ENCODE measurements at regions of chr6 and their contacts with region 1.

Region 1: DNA sequence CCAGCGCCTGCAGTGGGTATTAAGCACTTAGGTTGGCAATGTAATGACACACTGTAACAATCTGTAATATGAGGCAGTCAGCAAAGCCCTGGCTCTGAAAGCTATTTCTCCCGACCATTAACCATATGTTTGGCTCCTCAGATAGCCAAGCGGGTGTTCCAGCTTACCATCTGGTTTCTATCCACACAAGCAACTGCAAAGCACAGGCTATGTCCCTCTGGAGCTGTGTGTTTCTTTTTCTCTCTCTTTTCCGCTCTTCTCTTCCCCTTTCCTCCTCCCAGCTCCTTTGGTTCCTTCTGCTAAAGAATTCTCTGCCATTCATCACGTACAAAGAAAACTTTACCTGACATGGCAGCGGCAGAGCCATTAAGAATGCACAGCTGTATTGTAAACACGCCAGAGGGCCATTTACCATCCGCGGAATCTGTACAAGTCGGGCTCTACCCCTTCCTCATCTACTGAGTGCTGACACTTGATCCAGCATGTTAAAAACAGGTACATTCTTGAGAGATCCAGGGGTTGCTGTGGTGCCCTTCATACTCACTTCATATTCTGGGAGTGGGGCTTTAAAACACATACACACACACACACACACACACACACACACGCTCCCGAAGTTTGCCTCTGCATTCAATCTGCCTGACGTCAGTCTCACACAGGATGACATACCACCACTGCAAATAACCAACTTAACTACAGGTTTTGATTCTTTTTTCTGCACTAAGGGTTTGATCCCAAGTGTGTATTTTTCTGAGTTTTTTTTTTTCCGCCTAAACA is 77.2 kb downstream of the BACH2 start:
- DNase-seq: no peak
- ATAC-seq: peak; percentile 61
- H3K4me3 ChIP-seq: peak overlapping the region; percentile 1 to 34; a peak in 3 of 4 replicates
- H3K27ac ChIP-seq: peak overlapping the region; percentile 56
- H3K4me1 ChIP-seq: peaks cover 25% of the 10 kb centered on the region
- H3K27me3 ChIP-seq: no peaks in the 10 kb centered on the region
- CTCF ChIP-seq: no peak

Region 2: DNA sequence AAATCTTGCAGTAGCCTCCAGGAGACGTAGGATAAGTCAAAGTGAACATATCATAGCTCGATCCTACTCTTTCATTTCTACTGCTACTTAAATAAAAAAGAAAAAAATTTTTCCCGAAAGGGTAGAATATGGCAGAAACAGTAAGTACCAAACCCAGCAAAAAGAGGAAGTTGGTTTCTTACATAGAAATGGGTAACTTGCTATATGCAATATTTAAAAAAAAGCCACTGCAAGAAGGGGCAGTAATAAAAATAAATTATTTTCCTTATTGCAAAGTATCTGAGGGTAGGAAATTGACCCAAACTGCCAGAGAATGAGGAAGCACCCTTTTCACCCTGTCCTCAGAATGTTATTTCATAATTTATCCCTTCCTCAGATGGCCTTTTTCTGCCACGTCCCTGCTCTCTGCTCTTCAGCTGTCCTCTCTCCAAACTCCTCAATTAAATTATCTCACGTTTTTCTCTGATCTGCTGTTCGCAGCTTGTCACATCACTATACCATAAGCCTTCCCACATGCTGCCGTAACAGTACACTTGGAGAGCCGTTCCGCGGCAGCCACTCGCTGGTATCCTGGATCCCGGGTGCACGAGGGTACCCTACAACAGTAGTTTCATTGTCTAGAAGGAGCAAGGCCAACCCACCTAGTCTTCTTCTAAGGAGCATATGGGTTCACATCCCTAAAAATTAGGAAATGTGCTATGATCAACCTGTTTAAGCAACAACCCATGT is 72.3 kb before region 1 on chr6:
- CTCF ChIA-PET with region 1: no interaction called
- POLR2A ChIA-PET with region 1: interaction called, 12 read pairs
- in situ Hi-C with region 1: no loop called
- intact Hi-C with region 1: no loop called
- DNase-seq: no peak
- ATAC-seq: no peak
- H3K4me3 ChIP-seq: no peak overlapping the region
- H3K27ac ChIP-seq: no peak overlapping the region
- H3K4me1 ChIP-seq: no peaks in the 10 kb centered on the region
- H3K27me3 ChIP-seq: peaks cover 4% of the 10 kb centered on the region
- CTCF ChIP-seq: no peak

Region 3: GRCh38 chr6:90241229-90241880 is 22.0 kb after region 1 on chr6:
- CTCF ChIA-PET with region 1: no interaction called
- POLR2A ChIA-PET with region 1: no interaction called
- in situ Hi-C with region 1: no loop called
- intact Hi-C with region 1: no loop called
- DNase-seq: no peak
- ATAC-seq: no peak
- H3K4me3 ChIP-seq: no peak overlapping the region
- H3K27ac ChIP-seq: no peak overlapping the region
- H3K4me1 ChIP-seq: no peaks in the 10 kb centered on the region
- H3K27me3 ChIP-seq: no peaks in the 10 kb centered on the region
- CTCF ChIP-seq: no peak

Region 4: DNA sequence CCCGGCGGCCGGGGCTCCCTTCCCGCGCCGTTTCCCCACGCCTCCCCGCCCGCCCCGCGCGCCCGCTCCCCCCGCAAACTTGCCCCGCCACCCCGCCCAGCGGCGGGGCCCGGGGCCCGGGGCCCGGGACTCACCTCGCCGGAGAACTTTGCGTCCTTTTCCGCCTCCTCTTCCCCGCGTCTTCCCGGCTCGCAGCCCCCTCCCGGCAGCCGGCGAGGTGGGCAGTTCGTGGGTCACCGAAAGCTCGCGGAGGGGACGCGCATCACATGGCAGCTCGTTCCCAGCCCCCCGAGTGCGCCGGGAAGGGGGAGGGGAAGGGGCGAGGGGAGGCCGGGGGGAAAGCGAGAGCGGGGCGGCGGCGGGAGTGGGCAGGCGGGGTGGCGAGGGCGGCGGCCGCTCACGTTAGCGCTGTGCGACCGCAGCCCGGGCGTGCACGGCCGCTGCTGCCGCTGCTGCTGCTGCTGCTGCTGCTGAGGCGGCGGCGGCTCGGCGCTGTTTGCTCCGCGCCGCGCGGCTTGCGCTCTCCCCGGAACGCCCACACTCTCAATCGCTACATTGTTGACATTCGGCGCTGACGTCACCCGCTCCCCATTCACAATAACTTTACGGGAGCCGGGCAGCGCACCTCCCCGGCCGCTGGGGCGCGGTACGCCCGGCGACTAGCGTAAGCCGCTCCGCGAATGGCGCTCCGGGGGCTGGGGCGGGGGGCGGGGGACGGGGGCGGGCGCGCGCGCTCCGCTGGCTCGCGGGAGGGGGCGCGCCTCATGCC is 77.1 kb after region 1 on chr6 and contains the start of gene BACH2:
- CTCF ChIA-PET with region 1: interaction called, 16 read pairs
- POLR2A ChIA-PET with region 1: interaction called, 10 read pairs
- in situ Hi-C with region 1: no loop called
- intact Hi-C with region 1: no loop called
- DNase-seq: no peak
- ATAC-seq: peak; percentile 78
- H3K4me3 ChIP-seq: peak within 1 kb of the TSS; percentile 52 to 66
- H3K27ac ChIP-seq: no peak within 1 kb of the TSS
- H3K4me1 ChIP-seq: peaks cover 3% of the 10 kb centered on the region; the same call in 1 of the 2 replicates
- H3K27me3 ChIP-seq: peaks cover 7% of the 10 kb centered on the region
- CTCF ChIP-seq: 0 out of 2 replicates have a peak, but pooled peaks have one; percentile 4
- total RNA-seq, gene BACH2: 1.6 TPM

Measured in Panc1 (cell line).